ENCODE measurements at regions of chr15 and their contacts with region 1.

Region 1: GRCh38 chr15:59138243-59138642 is 33.3 kb downstream of the CCNB2 start:
- DNase-seq: peak; percentile 76
- ATAC-seq: peak; percentile 86
- H3K4me3 Mint-ChIP-seq: no peak overlapping the region
- H3K27ac Mint-ChIP-seq: peak overlapping the region; percentile 12
- H3K4me1 Mint-ChIP-seq: peaks cover 23% of the 10 kb centered on the region
- H3K27me3 Mint-ChIP-seq: no peaks in the 10 kb centered on the region

Region 2: DNA sequence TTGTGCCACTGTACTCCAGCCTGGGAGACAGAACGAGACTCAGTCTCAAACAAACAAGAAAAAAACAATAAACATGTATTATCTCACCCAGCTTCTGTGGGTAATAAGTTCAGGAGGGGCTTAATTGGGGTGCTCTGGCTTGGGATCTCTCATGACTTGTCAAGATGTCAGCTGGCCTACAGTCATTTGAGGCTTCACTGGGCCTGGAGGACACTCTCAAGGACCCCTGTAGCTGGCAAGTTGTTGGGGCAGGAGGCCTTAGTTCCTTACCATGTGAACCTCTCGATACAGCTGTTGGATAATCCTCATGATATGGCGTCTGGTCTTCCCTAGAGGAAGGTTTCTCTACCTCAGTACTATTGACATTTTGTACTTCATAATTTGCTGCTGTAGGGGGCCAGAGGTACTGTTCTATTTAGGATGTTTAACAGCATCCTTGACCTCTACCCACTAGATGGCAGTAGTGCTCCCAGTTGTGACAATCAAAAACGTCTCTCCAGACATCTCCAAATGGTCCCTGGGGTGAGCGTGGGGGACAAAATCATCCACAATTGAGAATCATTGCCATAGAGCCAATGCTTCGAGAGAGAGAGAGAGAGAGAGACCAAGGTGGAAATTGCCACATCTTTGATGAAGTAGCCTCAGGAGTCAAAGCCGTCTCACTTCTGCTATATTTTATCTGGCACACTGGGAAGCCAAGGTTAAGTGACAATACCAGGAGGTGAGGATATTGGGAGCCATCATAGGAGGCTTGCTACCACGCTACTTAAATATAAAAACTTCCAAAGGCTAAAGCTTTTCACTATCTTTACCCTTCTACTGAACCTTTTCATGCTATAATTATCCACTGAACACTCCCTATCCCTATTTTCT is 180.9 kb before region 1 on chr15:
- CTCF ChIA-PET with region 1: no interaction called
- POLR2A ChIA-PET with region 1: no interaction called
- intact Hi-C with region 1: loop called in 1 of 2 experiments (anchors 1 kb)
- DNase-seq: peak; percentile 73
- ATAC-seq: peak; percentile 84
- H3K4me3 Mint-ChIP-seq: no peak overlapping the region
- H3K27ac Mint-ChIP-seq: no peak overlapping the region
- H3K4me1 Mint-ChIP-seq: peaks cover 10% of the 10 kb centered on the region
- H3K27me3 Mint-ChIP-seq: no peaks in the 10 kb centered on the region